Mammary epithelial cell (primary cell): ENCODE measurements at regions of chr12 and their contacts with region 1.

Region 1: DNA sequence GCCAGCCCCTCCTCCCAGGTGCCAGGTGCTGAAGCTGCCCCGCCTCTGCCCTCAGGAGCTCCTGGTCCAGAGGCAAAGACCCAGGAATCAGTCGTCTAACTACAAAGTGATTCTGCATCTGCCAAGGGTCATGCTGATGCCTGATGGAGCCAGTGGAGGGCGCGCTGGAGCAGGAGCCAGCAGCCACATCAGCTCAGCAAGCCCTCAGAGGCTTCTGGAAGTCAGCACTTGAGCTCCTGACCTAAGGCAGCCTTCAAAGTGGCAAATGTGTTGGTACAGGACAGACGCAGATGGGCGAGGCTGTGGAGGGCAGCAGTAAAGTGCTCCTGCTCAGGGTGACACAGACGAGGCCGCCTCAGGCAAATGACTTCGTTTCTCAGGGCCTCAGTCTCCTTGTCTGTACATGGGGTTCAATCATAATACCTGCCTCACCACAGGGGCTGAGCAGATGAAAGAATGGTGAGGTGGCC is 10.9 kb downstream of the C12orf43 start:
- DNase-seq: peak; percentile 32
- H3K4me3 ChIP-seq: no peak overlapping the region
- H3K27ac ChIP-seq: no peak overlapping the region
- H3K4me1 ChIP-seq: no peaks in the 10 kb centered on the region
- H3K27me3 ChIP-seq: no peaks in the 10 kb centered on the region
- CTCF ChIP-seq: peak; percentile 67 to 78

Region 2: GRCh38 chr12:120710031-120710804 is 295.2 kb before region 1 on chr12 and contains the start of gene UNC119B:
- CTCF ChIA-PET with region 1: no interaction called
- dilution Hi-C with region 1: no loop called
- in situ Hi-C with region 1: no loop called
- intact Hi-C with region 1: loop called (anchors 5 kb)
- DNase-seq: peak; percentile 50
- H3K4me3 ChIP-seq: peak within 1 kb of the TSS; percentile 81 to 97 (median 93)
- H3K27ac ChIP-seq: peak within 1 kb of the TSS; percentile 84
- H3K4me1 ChIP-seq: peaks cover 15% of the 10 kb centered on the region
- H3K27me3 ChIP-seq: peaks cover 1% of the 10 kb centered on the region
- CTCF ChIP-seq: no peak
- total RNA-seq, gene UNC119B: 28.0 to 33.3 TPM

Region 3: GRCh38 chr12:120799243-120800045 is 205.9 kb before region 1 on chr12:
- CTCF ChIA-PET with region 1: no interaction called
- dilution Hi-C with region 1: no loop called
- in situ Hi-C with region 1: no loop called
- intact Hi-C with region 1: no loop called
- DNase-seq: no peak
- H3K4me3 ChIP-seq: no peak overlapping the region
- H3K27ac ChIP-seq: no peak overlapping the region
- H3K4me1 ChIP-seq: no peaks in the 10 kb centered on the region
- H3K27me3 ChIP-seq: no peaks in the 10 kb centered on the region
- CTCF ChIP-seq: no peak

Region 4: GRCh38 chr12:120944645-120945231 is 60.6 kb before region 1 on chr12:
- CTCF ChIA-PET with region 1: no interaction called
- dilution Hi-C with region 1: no loop called
- in situ Hi-C with region 1: no loop called
- intact Hi-C with region 1: no loop called
- DNase-seq: peak; percentile 30
- H3K4me3 ChIP-seq: no peak overlapping the region
- H3K27ac ChIP-seq: no peak overlapping the region
- H3K4me1 ChIP-seq: no peaks in the 10 kb centered on the region
- H3K27me3 ChIP-seq: no peaks in the 10 kb centered on the region
- CTCF ChIP-seq: peak; percentile 81 to 89

Region 5: GRCh38 chr12:121095544-121096198 is 90.3 kb after region 1 on chr12:
- CTCF ChIA-PET with region 1: no interaction called
- dilution Hi-C with region 1: loop called (anchors 10 kb)
- in situ Hi-C with region 1: loop called in 1 of 2 experiments (anchors 10 kb)
- intact Hi-C with region 1: loop called (anchors 1 kb)
- DNase-seq: no peak
- H3K4me3 ChIP-seq: peak overlapping the region in 1 of 3 experiments; percentile 0
- H3K27ac ChIP-seq: no peak overlapping the region
- H3K4me1 ChIP-seq: peaks cover 5% of the 10 kb centered on the region
- H3K27me3 ChIP-seq: no peaks in the 10 kb centered on the region
- CTCF ChIP-seq: peak; percentile 46 to 80

Region 6: DNA sequence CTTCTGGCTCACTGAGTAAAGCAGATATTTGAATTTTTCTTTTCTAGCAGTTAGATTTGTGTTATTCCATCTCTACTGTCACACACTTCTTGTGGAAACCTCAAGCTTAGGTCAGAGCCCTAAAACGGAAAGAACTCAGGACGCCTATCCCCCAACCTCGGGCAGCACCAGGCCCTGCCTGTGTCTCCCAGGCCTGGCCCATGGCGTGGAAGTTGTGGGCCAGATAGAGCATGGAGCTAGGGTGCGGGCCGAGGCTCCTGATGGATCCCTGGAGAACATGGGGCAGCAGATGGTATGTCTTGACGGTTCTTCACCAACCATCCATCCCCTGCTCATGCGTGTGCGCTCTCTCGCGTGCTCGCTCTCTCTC is 225.1 kb after region 1 on chr12:
- CTCF ChIA-PET with region 1: no interaction called
- dilution Hi-C with region 1: no loop called
- in situ Hi-C with region 1: no loop called
- intact Hi-C with region 1: loop called (anchors 1 kb)
- DNase-seq: no peak
- H3K4me3 ChIP-seq: no peak overlapping the region
- H3K27ac ChIP-seq: no peak overlapping the region
- H3K4me1 ChIP-seq: no peaks in the 10 kb centered on the region
- H3K27me3 ChIP-seq: no peaks in the 10 kb centered on the region
- CTCF ChIP-seq: no peak